ENCODE measurements at regions of chr7 and their contacts with region 1.

Region 1: DNA sequence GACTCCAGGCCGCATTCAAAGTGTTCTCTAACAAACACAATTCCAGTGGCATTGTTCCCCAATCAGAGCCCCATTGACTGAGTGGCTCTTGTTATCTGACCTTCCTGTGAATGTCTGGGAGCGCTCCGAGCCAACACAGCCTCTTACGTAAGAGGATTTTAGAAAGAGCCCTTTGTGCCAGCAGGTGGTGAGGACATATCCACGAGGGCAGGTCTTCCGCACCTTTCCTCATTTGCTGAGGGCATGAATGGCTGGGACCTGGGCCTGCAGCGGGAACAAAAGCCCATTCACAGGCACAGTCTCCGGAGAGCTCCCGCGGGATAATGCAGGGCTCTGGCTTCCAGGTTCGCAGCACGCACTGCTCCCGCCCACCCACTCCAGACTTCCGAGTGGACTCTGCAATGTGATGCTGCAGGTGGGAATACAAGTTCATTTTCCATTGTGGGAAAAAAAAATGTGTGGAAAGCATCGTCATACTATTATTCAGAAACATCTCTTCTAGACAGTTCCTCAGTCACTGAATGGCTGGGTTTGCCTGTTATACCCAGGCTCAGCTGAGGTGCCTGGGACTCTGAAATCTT is 295.0 kb upstream of the IGFBP3 start:
- DNase-seq: peak; percentile 94
- H3K4me3 Mint-ChIP-seq: peak overlapping the region; percentile 2
- H3K27ac Mint-ChIP-seq: peak overlapping the region; percentile 97
- H3K4me1 Mint-ChIP-seq: peaks cover 84% of the 10 kb centered on the region
- H3K27me3 Mint-ChIP-seq: no peaks in the 10 kb centered on the region
- CTCF ChIP-seq: no peak

Region 2: GRCh38 chr7:45682836-45683555 is 533.1 kb before region 1 on chr7:
- CTCF ChIA-PET with region 1: no interaction called
- intact Hi-C with region 1: no loop called
- DNase-seq: no peak
- H3K4me3 Mint-ChIP-seq: no peak overlapping the region
- H3K27ac Mint-ChIP-seq: no peak overlapping the region
- H3K4me1 Mint-ChIP-seq: peaks cover 10% of the 10 kb centered on the region
- H3K27me3 Mint-ChIP-seq: peaks cover 20% of the 10 kb centered on the region
- CTCF ChIP-seq: no peak

Region 3: DNA sequence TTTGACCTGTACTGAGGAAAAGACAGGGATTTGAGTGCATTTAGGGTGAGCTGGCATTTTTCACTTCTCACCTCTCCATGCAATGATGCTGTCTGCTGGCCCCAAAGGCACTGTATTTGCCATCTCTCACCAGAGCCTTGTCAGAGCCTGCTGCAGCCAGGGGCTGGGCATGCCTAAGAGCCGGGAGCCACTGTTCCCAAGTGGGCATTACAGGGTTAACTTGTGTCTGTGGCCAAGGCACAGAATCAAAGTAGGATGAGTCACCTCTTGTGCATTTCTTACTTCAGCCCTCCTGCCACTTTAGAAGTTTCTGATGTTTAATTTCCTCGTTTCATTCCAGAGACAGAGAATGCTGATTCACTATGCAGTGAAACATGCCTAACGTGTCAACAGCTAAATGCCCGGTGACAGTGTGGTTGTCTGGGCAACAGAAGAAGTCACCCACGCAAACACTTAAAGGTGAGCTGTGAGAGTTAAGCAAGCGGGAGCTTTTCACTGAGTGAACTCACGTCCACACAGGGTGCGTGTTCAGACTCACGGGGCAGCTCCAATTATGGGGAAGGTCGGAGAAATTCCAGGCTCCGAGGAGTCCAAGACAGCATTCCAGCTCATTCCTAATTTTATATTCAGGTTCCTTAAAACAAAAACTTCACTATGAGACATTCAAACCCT is 237.9 kb before region 1 on chr7:
- CTCF ChIA-PET with region 1: no interaction called
- intact Hi-C with region 1: loop called (anchors 2 kb)
- DNase-seq: peak; percentile 89
- H3K4me3 Mint-ChIP-seq: peak overlapping the region; percentile 37
- H3K27ac Mint-ChIP-seq: peak overlapping the region; percentile 99
- H3K4me1 Mint-ChIP-seq: peaks cover 73% of the 10 kb centered on the region
- H3K27me3 Mint-ChIP-seq: no peaks in the 10 kb centered on the region
- CTCF ChIP-seq: no peak

Region 4: GRCh38 chr7:46282155-46282554 is 66.1 kb after region 1 on chr7:
- CTCF ChIA-PET with region 1: no interaction called
- intact Hi-C with region 1: loop called (anchors 2 kb)
- DNase-seq: peak; percentile 30
- H3K4me3 Mint-ChIP-seq: no peak overlapping the region
- H3K27ac Mint-ChIP-seq: no peak overlapping the region
- H3K4me1 Mint-ChIP-seq: peaks cover 47% of the 10 kb centered on the region
- H3K27me3 Mint-ChIP-seq: no peaks in the 10 kb centered on the region
- CTCF ChIP-seq: no peak

Region 5: DNA sequence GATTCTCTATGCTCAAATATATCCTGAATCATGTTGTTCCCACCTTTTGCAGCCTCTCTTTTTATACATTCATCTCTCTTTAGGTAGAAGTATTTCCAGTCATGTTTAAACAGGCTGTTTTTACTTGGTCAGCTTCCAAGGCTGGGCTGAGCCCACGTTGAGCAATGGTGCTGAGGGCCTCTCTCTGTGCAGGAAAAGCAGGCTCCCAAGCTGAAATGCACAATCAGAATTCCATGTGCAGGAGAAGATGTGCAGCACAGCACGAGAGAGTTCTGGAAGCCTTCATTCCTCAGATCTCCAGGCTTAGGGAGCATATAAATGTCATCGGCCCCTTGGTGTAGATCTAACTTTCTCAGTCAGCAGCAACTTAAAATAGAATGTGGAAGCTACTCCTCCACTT is 777.3 kb after region 1 on chr7:
- CTCF ChIA-PET with region 1: interaction called, 10 read pairs
- intact Hi-C with region 1: no loop called
- DNase-seq: no peak
- H3K4me3 Mint-ChIP-seq: no peak overlapping the region
- H3K27ac Mint-ChIP-seq: no peak overlapping the region
- H3K4me1 Mint-ChIP-seq: no peaks in the 10 kb centered on the region
- H3K27me3 Mint-ChIP-seq: no peaks in the 10 kb centered on the region
- CTCF ChIP-seq: no peak

Measured in Calu3 (cell line).